PC-9 (cell line): ENCODE measurements at regions of chr22 and their contacts with region 1.

Region 1: DNA sequence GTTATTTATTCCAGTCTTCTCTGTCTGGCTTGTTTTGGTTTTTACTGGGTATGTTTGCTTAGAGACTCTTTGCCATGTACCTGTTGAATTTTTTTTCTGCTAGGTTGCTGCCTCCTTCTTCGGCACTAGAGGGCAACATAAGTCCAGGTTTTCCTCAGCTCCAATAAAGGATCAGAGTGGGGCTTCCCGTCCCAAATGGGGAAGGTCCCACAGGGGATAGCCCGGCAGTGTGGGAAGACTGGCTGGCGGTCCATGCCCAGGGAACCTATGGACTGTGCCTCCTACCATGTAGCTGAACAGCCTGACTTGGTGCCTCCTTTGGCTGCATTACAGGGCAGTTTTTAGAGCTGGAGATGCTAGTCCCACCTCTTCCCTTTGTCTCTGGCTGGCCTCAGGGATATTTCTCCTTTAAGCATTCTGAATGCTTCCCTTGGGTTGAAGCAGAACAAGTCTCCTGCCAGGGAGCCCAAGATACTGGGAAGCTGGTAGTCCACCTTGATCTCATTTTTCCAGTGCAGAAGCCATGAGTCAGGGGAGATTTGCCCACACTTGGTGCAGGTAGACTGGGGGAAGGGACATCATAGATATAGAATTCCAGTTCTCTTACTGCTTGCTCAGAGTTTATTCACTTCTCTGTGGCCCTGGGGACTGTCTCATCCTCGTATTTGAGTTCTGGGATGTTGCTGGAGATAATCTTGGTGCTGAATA is 60.2 kb downstream of the BRD1 start:
- DNase-seq: peak; percentile 40 to 53
- H3K4me3 ChIP-seq: no peak overlapping the region
- H3K27ac ChIP-seq: no peak overlapping the region
- H3K4me1 ChIP-seq: no peaks in the 10 kb centered on the region
- H3K27me3 ChIP-seq: peaks cover 13% of the 10 kb centered on the region; the same call in 1 of the 2 replicates
- CTCF ChIP-seq: peak; percentile 97

Region 2: GRCh38 chr22:49917974-49918910 is 150.7 kb after region 1 on chr22 and contains the starts of genes ALG12 and CRELD2:
- CTCF ChIA-PET with region 1: no interaction called
- POLR2A ChIA-PET with region 1: no interaction called
- intact Hi-C with region 1: loop called (anchors 2 kb)
- DNase-seq: peak; percentile 92 to 96
- H3K4me3 ChIP-seq: peak within 1 kb of the TSS; percentile 82
- H3K27ac ChIP-seq: peak within 1 kb of the TSS; percentile 88
- H3K4me1 ChIP-seq: peaks cover 17% of the 10 kb centered on the region
- H3K27me3 ChIP-seq: no peaks in the 10 kb centered on the region
- CTCF ChIP-seq: no peak
- total RNA-seq, gene ALG12: 16.8 and 19.2 TPM in 2 replicates
- total RNA-seq, gene CRELD2: 30.7 and 34.1 TPM in 2 replicates

Region 3: GRCh38 chr22:49992921-49993648 is 225.6 kb after region 1 on chr22:
- CTCF ChIA-PET with region 1: no interaction called
- POLR2A ChIA-PET with region 1: no interaction called
- intact Hi-C with region 1: loop called (anchors 5 kb)
- DNase-seq: peak; percentile 32 to 52
- H3K4me3 ChIP-seq: no peak overlapping the region
- H3K27ac ChIP-seq: no peak overlapping the region
- H3K4me1 ChIP-seq: no peaks in the 10 kb centered on the region; the same call in none of the 2 replicates
- H3K27me3 ChIP-seq: peaks cover 37% of the 10 kb centered on the region
- CTCF ChIP-seq: peak; percentile 87